Motor neuron (in vitro differentiated cells): ENCODE measurements at regions of chr7 and their contacts with region 1.

Region 1: DNA sequence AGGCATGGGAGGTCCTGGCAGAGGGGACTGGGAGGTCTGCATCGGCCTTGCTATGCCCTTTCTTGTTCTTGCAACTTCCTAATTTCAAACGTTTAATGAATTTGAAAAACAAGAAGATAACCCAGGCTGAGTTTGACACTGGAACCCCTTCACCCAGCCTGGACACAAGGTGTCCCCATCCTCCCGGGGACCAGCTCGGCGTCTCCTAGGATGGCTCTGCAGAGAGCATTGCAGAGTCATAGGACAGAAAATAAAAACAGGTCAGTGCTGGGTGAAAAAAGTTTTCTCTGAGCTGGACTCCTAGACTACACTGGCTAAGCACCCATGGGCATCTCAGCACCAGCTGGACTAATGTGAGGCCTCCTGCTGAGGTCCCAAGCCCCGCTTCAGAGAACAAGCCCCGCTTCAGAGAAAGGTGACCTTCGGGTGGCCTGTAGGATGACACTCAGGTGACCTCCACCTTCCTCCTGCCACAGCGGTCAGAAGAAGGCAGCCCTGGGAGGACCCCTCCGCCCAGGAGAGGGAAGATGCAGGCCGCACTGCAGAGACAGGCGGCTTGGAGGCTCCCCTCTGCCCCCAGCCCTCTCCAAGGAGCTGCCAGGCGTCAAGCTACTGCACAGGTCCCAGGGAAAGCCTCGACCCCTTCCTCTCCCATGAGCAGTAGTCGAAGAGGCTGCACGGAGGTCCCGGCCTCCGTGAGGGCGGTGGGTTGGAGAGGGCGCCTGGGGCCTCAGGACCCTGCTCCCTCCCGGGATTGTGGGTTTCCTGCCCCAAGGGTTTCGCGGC is 9.3 kb upstream of the UNCX start:
- ATAC-seq: peak in 1 of 8 experiments; percentile 19
- H3K4me3 ChIP-seq: no peak overlapping the region
- H3K27ac ChIP-seq: no peak overlapping the region
- H3K4me1 ChIP-seq: no peaks in the 10 kb centered on the region

Region 2: DNA sequence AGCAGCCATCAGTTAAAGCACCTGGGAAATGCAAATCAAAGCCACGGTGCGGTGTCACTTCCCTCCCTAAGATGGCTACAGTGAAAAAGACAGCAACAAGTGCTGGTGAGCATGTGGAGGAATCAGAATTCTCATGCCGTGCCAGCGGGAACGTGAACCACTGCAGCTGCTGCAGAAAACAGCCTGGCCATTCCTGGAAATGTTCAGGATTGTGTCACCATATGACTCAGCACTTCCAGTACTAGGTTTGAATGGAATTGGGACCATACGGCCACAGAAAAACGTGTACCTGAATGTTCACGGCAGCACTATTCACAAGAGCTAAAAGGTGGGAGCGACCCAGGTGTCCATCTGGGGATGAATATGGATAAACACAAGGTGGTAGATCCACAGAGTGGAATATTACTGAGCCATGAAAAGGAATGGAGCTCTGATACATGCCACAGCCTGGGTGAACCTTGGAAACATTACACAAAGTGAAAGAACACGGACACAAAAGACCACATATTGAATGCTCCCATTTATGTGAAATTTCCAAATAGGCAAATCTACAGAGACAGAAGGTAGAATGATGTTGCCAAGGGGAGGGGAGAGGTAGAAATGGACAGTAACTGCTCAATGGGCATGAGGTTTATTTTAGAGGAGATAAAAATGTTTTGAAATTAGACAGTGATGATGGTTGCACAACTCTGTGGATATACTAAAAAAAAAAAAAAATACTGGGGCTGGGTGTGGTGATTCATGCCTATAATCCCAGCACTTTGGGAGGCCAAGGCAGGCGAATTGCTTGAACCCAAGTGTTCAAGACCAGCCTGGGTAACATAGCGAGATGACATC is 174.3 kb after region 1 on chr7:
- in situ Hi-C with region 1: loop called in 3 of 9 experiments (anchors 25 kb)
- ATAC-seq: no peak
- H3K4me3 ChIP-seq: no peak overlapping the region
- H3K27ac ChIP-seq: no peak overlapping the region
- H3K4me1 ChIP-seq: peaks cover 0 to 4% of the 10 kb centered on the region in 2 donors

Region 3: DNA sequence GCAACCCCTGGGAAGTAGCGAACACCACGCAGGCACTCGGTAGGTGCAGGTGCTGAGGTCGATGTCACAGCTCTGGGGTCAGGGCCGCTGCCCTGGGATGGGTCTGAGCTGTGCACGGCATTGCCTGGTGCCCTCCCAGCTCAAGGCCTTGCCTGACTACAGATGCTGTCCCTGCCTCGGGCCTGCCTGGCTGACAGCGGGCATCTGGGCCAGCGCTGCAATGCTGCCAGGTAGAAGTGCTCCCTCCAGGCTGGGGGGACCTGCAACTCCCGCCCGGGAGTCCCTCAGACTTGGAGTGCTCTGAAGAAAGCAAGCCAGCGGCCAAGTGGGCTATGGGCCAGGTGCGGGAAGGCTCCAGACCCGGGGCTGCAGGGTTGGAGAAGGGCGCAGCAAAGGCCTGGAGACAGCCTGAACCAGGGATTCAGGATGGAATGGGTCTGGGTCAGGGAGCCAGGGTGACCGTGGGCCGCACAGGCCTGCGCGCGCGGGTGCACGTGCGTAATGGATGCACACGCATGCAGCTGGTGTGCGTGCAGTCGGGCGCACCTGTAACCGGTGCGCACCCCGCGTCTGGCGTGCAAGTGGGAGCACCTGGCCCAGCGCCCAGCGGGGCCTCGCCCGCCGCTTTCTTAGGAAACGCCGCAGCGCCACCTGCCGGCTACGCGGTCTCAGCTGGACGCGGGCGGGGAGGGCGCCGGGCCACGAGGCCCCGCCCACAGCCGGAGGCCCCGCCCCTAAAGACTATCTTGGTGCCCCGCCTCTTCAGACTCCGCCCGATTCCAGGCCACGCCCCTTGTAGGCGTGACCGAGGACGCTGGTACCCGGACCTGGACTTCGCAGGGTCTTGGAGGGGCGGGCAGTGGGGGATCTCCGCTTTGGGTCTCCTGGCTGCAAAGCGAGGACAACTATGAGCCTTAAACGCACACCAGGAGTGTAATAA is 189.2 kb after region 1 on chr7:
- in situ Hi-C with region 1: loop called in 1 of 9 experiments (anchors 25 kb)
- ATAC-seq: peak; percentile 87 to 96 (median 88)
- H3K4me3 ChIP-seq: no peak overlapping the region
- H3K27ac ChIP-seq: no peak overlapping the region
- H3K4me1 ChIP-seq: peaks cover 0 to 7% of the 10 kb centered on the region in 2 donors

Region 4: GRCh38 chr7:1432411-1433082 is 209.2 kb after region 1 on chr7:
- in situ Hi-C with region 1: loop called in 1 of 9 experiments (anchors 25 kb)
- ATAC-seq: peak; percentile 32 to 88 (median 58)
- H3K4me3 ChIP-seq: no peak overlapping the region
- H3K27ac ChIP-seq: no peak overlapping the region
- H3K4me1 ChIP-seq: peaks cover 0 to 3% of the 10 kb centered on the region in 2 donors